ENCODE measurements at regions of chr17 and their contacts with region 1.

Region 1: GRCh38 chr17:67475236-67475937 is 98.3 kb downstream of the PITPNC1 start:
- DNase-seq: peak; percentile 78
- ATAC-seq: peak; percentile 79
- H3K4me3 Mint-ChIP-seq: no peak overlapping the region
- H3K27ac Mint-ChIP-seq: peak overlapping the region; percentile 59
- H3K4me1 Mint-ChIP-seq: peaks cover 44% of the 10 kb centered on the region
- H3K27me3 Mint-ChIP-seq: no peaks in the 10 kb centered on the region
- CTCF ChIP-seq: peak; percentile 48

Region 2: DNA sequence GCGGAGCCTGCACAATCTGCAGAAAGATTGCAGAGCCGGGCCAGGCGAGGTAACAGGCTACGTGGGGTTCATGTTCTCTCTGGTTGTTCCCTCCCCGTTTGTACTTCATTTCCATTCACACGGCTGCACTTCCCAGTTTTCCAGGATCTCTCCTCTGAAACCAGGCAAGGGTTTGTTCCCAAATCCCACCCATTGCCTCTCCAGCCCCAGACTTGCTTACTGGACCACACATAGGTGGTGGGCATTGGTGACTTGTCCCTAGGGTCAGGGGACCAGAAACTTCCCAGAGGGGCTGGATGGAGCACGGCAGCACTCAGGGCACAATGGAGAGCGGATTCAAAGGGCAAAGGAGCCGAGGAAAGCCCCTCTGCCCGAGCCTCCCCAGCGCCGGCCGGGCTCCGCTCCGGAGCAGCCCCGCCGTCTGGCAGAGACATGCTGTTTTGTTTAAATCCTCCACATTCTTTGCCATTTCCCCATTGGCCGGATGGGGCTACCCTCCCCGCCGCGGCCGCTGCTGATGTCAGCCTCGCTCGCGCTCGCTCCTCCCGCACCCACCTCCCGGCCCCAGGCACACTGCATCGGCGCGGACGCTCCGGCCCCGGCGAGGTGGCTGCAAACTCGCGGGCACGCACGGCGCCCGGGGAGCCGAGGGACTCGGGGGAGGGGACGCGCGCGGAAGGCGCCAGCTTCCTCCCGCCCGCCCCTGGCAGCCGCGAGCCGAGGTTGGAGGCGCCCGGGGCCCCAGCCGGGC is 98.5 kb before region 1 on chr17 and contains the start of gene PITPNC1:
- CTCF ChIA-PET with region 1: interaction called, 38 read pairs
- POLR2A ChIA-PET with region 1: no interaction called
- DNase-seq: peak; percentile 87
- ATAC-seq: peak; percentile 71
- H3K4me3 Mint-ChIP-seq: peak within 1 kb of the TSS; percentile 81
- H3K27ac Mint-ChIP-seq: peak within 1 kb of the TSS; percentile 96
- H3K4me1 Mint-ChIP-seq: peaks cover 35% of the 10 kb centered on the region
- H3K27me3 Mint-ChIP-seq: no peaks in the 10 kb centered on the region; the same call in 1 of the 2 replicates
- CTCF ChIP-seq: no peak
- total RNA-seq, gene PITPNC1: 36.9 to 42.0 TPM (median 39.8 TPM) in 3 replicates

Region 3: DNA sequence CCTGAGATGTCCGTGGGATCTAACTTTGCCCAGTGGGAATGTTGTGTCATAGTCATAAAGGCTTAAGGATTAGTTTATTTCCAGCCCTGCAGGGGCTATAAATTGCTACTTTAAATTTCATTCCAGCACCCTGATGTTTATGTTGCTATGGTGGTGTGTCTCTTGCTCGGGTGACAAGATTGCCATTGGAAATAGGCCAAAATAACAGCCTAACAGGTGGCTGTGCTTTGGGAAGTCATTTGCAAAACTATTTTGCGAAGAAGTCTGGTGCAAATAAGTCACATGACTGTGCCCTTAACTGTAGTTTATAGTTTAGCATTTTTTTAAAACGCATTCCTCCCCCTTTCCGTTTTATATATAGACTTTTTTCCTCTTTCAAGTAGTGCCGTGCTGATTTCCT is 75.2 kb before region 1 on chr17:
- CTCF ChIA-PET with region 1: interaction called, 4 read pairs
- POLR2A ChIA-PET with region 1: interaction called, 12 read pairs
- DNase-seq: no peak
- ATAC-seq: no peak
- H3K4me3 Mint-ChIP-seq: no peak overlapping the region
- H3K27ac Mint-ChIP-seq: no peak overlapping the region
- H3K4me1 Mint-ChIP-seq: peaks cover 41% of the 10 kb centered on the region
- H3K27me3 Mint-ChIP-seq: no peaks in the 10 kb centered on the region
- CTCF ChIP-seq: no peak

Region 4: GRCh38 chr17:67461876-67462275 is 13.5 kb before region 1 on chr17:
- CTCF ChIA-PET with region 1: interaction called, 17 read pairs
- POLR2A ChIA-PET with region 1: no interaction called
- DNase-seq: no peak
- ATAC-seq: no peak
- H3K4me3 Mint-ChIP-seq: no peak overlapping the region
- H3K27ac Mint-ChIP-seq: no peak overlapping the region; the same call in 1 of the 2 replicates
- H3K4me1 Mint-ChIP-seq: peaks cover 34% of the 10 kb centered on the region
- H3K27me3 Mint-ChIP-seq: no peaks in the 10 kb centered on the region
- CTCF ChIP-seq: no peak

Region 5: GRCh38 chr17:67528751-67529436 is 53.5 kb after region 1 on chr17:
- CTCF ChIA-PET with region 1: interaction called, 10 read pairs
- POLR2A ChIA-PET with region 1: no interaction called
- DNase-seq: peak; percentile 69
- ATAC-seq: peak; percentile 88
- H3K4me3 Mint-ChIP-seq: peak overlapping the region; percentile 2; the same call in 1 of the 2 replicates
- H3K27ac Mint-ChIP-seq: peak overlapping the region; percentile 56
- H3K4me1 Mint-ChIP-seq: peaks cover 47% of the 10 kb centered on the region
- H3K27me3 Mint-ChIP-seq: no peaks in the 10 kb centered on the region
- CTCF ChIP-seq: no peak

Region 6: GRCh38 chr17:67912656-67913055 is 437.3 kb after region 1 on chr17:
- CTCF ChIA-PET with region 1: no interaction called
- POLR2A ChIA-PET with region 1: no interaction called
- DNase-seq: no peak
- ATAC-seq: no peak
- H3K4me3 Mint-ChIP-seq: no peak overlapping the region
- H3K27ac Mint-ChIP-seq: no peak overlapping the region
- H3K4me1 Mint-ChIP-seq: no peaks in the 10 kb centered on the region
- H3K27me3 Mint-ChIP-seq: no peaks in the 10 kb centered on the region
- CTCF ChIP-seq: no peak

Measured in WTC11 (cell line).